ENCODE measurements at regions of chr11 and their contacts with region 1.

Region 1: DNA sequence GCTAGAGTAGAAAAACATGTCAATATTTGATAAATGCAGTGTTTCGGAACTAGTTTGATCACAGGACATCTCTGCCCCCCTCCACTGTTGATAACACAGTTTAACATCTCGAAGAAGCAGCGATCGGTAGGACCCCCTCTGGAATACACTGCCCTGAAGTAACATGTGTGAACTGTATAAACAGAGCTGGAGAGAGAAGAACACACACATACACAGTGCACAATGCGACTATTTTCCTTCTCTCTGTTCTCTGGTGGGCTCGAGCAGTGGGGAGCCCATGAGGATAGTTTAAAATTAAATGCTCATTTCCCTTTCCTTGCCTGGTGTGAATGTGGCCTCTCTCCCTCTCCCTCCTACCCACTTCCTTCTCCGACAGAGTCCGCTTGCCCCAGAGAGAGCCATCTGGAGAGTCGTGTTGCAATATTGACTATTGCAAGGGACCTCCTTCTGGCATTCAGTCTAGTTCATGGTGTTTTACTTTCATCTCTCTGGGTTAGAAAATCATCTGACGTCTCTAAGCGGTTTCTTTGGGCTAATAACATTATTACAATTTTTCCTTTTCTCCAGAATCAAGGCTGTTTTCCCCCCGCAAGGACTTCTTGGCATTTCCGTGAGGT is 51.6 kb upstream of the BARX2 start:
- DNase-seq: peak in 1 of 3 donors; percentile 69
- ATAC-seq: peak; percentile 75 to 81 (median 78)
- H3K4me3 ChIP-seq: peak overlapping the region; percentile 18 to 42 (median 31)
- H3K27ac ChIP-seq: peak overlapping the region; percentile 75 to 85 (median 78)
- H3K4me1 ChIP-seq: peaks cover 0 to 40% (median 22%) of the 10 kb centered on the region in 4 donors
- H3K27me3 ChIP-seq: no peaks in the 10 kb centered on the region
- CTCF ChIP-seq: no peak
- POLR2A ChIP-seq: no peak

Region 2: GRCh38 chr11:129117595-129118350 is 206.2 kb before region 1 on chr11:
- intact Hi-C with region 1: loop called in 1 of 2 experiments (anchors 10 kb)
- DNase-seq: peak in 1 of 3 donors; percentile 46
- ATAC-seq: peak; percentile 84 to 91 (median 87)
- H3K4me3 ChIP-seq: no peak overlapping the region
- H3K27ac ChIP-seq: no peak overlapping the region
- H3K4me1 ChIP-seq: peaks cover 0 to 8% (median 0%) of the 10 kb centered on the region in 4 donors
- H3K27me3 ChIP-seq: no peaks in the 10 kb centered on the region
- CTCF ChIP-seq: peak; percentile 76 to 91 (median 84)
- POLR2A ChIP-seq: no peak

Region 3: DNA sequence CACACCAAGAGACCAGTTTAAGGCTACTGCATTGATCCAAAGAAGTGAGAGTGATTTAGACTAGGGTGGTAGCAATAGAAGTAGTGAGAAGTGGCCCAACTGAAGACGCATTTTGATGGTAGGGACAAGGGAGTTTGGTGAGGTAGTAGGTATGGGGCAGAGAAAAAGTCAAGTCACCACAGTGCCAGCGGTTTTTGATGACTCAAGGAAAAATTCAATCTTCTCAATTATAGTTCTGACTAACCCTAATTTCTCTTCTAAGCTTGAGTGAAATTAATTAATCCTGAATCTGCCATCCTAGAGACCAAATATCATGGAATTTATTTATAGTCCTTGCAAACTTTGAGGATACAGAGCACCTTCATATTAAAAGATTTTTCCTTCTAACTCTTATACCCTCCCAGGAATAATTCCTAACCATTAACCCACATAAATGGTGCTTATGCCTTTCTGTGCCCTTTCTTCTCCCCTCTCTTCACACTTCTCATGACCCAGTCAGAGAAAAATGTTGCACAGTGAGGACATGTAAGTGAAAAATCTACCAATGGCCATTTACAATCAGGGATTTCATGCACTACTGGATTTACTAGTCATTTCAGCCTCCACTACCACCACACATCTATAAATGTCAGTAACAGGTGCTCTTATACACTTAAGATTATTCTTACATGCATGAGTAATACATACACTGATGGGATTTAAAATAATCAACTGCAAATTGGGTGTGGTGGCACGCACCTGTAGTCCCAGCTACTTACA is 85.9 kb before region 1 on chr11:
- intact Hi-C with region 1: loop called in 1 of 2 experiments (anchors 5 kb)
- DNase-seq: no peak
- ATAC-seq: no peak
- H3K4me3 ChIP-seq: no peak overlapping the region
- H3K27ac ChIP-seq: no peak overlapping the region
- H3K4me1 ChIP-seq: peaks cover 0 to 11% (median 0%) of the 10 kb centered on the region in 4 donors
- H3K27me3 ChIP-seq: no peaks in the 10 kb centered on the region
- CTCF ChIP-seq: no peak
- POLR2A ChIP-seq: no peak